ENCODE measurements at regions of chr4 and their contacts with region 1.

Region 1: GRCh38 chr4:39078829-39079228 is 16.8 kb downstream of the KLHL5 start:
- DNase-seq: no peak
- ATAC-seq: no peak
- H3K4me3 ChIP-seq: no peak overlapping the region
- H3K27ac ChIP-seq: no peak overlapping the region
- H3K4me1 ChIP-seq: no peaks in the 10 kb centered on the region
- H3K27me3 ChIP-seq: no peaks in the 10 kb centered on the region
- CTCF ChIP-seq: no peak
- POLR2A ChIP-seq: no peak

Region 2: GRCh38 chr4:39053983-39054382 is 24.8 kb before region 1 on chr4:
- in situ Hi-C with region 1: no loop called
- intact Hi-C with region 1: loop called (anchors 2 kb)
- DNase-seq: no peak
- ATAC-seq: no peak
- H3K4me3 ChIP-seq: no peak overlapping the region
- H3K27ac ChIP-seq: no peak overlapping the region
- H3K4me1 ChIP-seq: no peaks in the 10 kb centered on the region
- H3K27me3 ChIP-seq: no peaks in the 10 kb centered on the region
- CTCF ChIP-seq: no peak
- POLR2A ChIP-seq: no peak

Measured in gastrocnemius medialis (tissue), 4 donors.